ENCODE measurements at regions of chr4 and their contacts with region 1.

Region 1: GRCh38 chr4:185183619-185184281 is 20.1 kb downstream of the CFAP97 start:
- DNase-seq: peak; percentile 66
- H3K4me3 ChIP-seq: no peak overlapping the region
- H3K27ac ChIP-seq: no peak overlapping the region
- H3K4me1 ChIP-seq: no peaks in the 10 kb centered on the region
- H3K27me3 ChIP-seq: no peaks in the 10 kb centered on the region
- CTCF ChIP-seq: peak; percentile 80 to 85

Region 2: GRCh38 chr4:184568770-184569169 is 615.0 kb before region 1 on chr4:
- CTCF ChIA-PET with region 1: no interaction called
- dilution Hi-C with region 1: no loop called
- in situ Hi-C with region 1: no loop called
- intact Hi-C with region 1: no loop called
- DNase-seq: no peak
- H3K4me3 ChIP-seq: no peak overlapping the region
- H3K27ac ChIP-seq: no peak overlapping the region
- H3K4me1 ChIP-seq: no peaks in the 10 kb centered on the region
- H3K27me3 ChIP-seq: no peaks in the 10 kb centered on the region
- CTCF ChIP-seq: no peak

Region 3: DNA sequence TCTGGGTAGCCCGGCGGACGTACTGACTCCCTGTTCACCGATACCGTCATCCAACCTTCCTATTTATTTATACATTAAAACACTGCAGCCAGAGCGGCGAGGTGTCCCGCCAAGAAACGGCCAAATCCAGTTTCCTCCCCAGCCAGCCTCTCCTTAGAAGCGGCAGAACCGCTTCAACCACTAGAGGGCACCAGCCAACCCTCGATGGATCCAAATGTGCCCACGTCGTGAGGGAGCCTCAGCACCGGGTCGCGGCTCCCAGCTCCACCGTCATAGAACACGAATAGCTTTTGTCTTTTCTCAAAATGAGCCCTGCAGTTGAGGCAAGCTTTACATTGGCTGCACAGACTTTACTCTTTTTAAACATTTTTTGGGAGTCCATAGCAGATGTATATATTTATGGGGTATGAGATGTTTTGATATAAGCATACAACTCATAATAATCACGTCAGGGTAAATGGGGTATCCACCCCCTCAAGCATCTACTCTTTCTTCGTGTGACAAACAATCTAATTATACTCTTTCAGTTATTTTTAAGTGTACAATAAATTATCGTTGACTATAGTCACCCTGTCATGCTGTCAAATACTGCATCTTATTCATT is 178.4 kb before region 1 on chr4:
- CTCF ChIA-PET with region 1: no interaction called
- dilution Hi-C with region 1: no loop called
- in situ Hi-C with region 1: no loop called
- intact Hi-C with region 1: loop called (anchors 1 kb)
- DNase-seq: peak; percentile 63
- H3K4me3 ChIP-seq: peak overlapping the region in 1 of 3 experiments; percentile 27
- H3K27ac ChIP-seq: no peak overlapping the region
- H3K4me1 ChIP-seq: peaks cover 5% of the 10 kb centered on the region
- H3K27me3 ChIP-seq: peaks cover 4% of the 10 kb centered on the region
- CTCF ChIP-seq: peak; percentile 84 to 95

Measured in mammary epithelial cell (primary cell).